ENCODE measurements at regions of chr2 and their contacts with region 1.

Region 1: DNA sequence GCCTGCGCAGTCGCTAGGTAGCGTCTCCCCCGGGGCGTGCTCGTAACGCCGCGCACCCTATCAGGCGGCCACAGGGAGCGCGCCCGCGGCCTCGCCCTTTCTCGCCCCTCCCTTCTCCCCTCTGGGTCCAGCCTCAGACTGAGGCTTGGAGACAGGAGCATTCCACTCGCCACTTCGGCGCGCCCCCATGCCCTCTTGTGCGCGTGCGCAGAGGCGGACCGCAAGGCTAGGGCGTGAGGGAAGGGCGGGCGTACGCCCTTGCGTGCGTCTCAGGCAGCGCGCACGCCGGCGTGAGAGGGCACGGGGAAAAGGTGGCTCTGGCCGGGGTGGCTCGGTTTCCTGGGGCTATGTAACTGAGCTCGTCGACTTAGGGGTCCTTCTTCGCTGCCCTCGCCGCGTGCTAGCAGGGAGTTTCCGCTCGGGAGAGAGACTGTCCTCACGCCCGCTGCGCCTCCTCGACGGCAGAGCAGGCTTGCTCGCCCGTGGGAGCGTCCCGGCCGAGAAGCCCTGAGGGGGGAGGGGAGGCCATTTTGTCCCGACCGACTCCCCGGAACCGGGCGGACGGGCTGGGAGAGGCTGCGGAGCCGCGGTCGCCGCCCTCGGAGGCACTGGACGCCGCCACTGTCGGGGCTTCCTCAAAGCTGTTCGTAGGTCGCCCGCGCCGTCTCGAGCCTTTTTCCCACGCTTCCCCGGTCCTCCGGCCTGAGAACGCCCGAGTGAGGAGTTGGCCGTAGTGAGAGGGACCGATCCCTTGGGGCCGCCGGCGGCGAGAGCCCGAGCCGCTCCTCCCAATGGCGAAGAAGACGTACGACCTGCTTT is at the start of gene RAB10:
- DNase-seq: peak; percentile 97 to 99
- H3K4me3 ChIP-seq: peak within 1 kb of the TSS; percentile 97 to 99 (median 99)
- H3K27ac ChIP-seq: peak within 1 kb of the TSS; percentile 90
- H3K4me1 ChIP-seq: peaks cover 0 to 4% (median 1%) of the 10 kb centered on the region in 4 experiments; a peak in 6 of 7 replicates
- H3K27me3 ChIP-seq: no peaks in the 10 kb centered on the region
- CTCF ChIP-seq: 0 out of 4 replicates have a peak, but pooled peaks of 1 of the 3 experiments have one; percentile 2
- EP300 ChIP-seq: no peak
- POLR2A ChIP-seq: peak; percentile 90 to 92
- RAD21 ChIP-seq: no peak
- total RNA-seq, gene RAB10: 127 and 136 TPM in 2 replicates

Region 2: GRCh38 chr2:26008822-26009566 is 25.0 kb before region 1 on chr2:
- CTCF ChIA-PET with region 1: interaction called, 3 read pairs
- POLR2A ChIA-PET with region 1: interaction called, 16 read pairs
- DNase-seq: no peak
- H3K4me3 ChIP-seq: no peak overlapping the region
- H3K27ac ChIP-seq: no peak overlapping the region
- H3K4me1 ChIP-seq: peaks cover 3 to 8% (median 4%) of the 10 kb centered on the region in 4 experiments; a peak in 4 of 7 replicates
- H3K27me3 ChIP-seq: no peaks in the 10 kb centered on the region
- CTCF ChIP-seq: no peak
- EP300 ChIP-seq: no peak
- POLR2A ChIP-seq: no peak
- RAD21 ChIP-seq: no peak

Region 3: GRCh38 chr2:26048791-26049190 is 14.8 kb after region 1 on chr2:
- CTCF ChIA-PET with region 1: interaction called, 3 read pairs
- POLR2A ChIA-PET with region 1: interaction called, 16 read pairs
- DNase-seq: no peak
- H3K4me3 ChIP-seq: no peak overlapping the region
- H3K27ac ChIP-seq: no peak overlapping the region
- H3K4me1 ChIP-seq: peaks cover 0 to 6% (median 2%) of the 10 kb centered on the region in 4 experiments; a peak in 2 of 7 replicates
- H3K27me3 ChIP-seq: no peaks in the 10 kb centered on the region
- CTCF ChIP-seq: no peak
- EP300 ChIP-seq: no peak
- POLR2A ChIP-seq: no peak
- RAD21 ChIP-seq: no peak

Region 4: GRCh38 chr2:26058390-26058789 is 24.4 kb after region 1 on chr2:
- CTCF ChIA-PET with region 1: interaction called, 7 read pairs
- POLR2A ChIA-PET with region 1: interaction called, 14 read pairs
- DNase-seq: no peak
- H3K4me3 ChIP-seq: no peak overlapping the region
- H3K27ac ChIP-seq: no peak overlapping the region
- H3K4me1 ChIP-seq: no peaks in the 10 kb centered on the region; a peak in 1 of 7 replicates
- H3K27me3 ChIP-seq: no peaks in the 10 kb centered on the region
- CTCF ChIP-seq: no peak
- EP300 ChIP-seq: no peak
- POLR2A ChIP-seq: no peak
- RAD21 ChIP-seq: no peak

Region 5: DNA sequence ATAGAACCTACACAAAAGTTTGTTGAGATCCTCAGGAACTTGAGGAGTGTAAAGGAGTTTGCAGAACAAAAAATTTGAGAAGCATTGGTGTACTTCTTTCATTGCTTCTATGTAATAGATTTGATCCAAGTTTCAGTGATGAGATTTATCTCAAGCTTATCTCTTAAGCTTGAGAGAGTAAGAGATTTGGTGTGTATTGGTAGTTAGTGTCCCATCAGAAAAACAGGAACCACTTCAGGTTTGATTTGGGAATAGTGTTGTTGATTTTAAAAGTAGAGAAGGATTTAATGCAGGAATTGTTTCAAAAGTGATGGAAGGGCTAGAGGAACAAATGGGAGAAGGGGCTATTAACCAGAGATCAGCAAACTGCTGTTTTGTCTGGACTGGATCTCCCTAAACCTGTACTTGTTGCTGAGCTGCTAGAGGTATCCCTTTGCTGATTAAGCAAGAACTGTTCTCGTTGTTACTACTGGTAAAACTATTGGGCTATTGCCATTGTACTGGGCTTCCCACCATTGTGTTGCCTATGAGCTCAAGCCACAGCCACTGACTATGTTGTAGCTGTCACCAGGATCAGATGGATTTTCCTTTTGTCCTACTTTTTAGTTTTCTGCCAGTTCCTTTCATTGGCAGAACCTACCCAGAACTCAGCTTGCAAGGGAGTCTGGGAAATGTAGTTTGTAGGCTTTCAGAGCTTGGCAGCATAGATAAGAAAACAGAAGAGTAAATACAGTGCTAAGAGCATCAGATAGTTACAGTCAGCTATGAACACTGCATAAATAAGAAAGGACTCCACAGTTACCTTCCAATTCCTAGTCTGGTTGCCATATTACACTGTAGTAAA is 39.1 kb after region 1 on chr2:
- CTCF ChIA-PET with region 1: interaction called, 5 read pairs
- POLR2A ChIA-PET with region 1: interaction called, 44 read pairs
- DNase-seq: no peak
- H3K4me3 ChIP-seq: no peak overlapping the region
- H3K27ac ChIP-seq: no peak overlapping the region
- H3K4me1 ChIP-seq: peaks cover 0 to 13% (median 2%) of the 10 kb centered on the region in 4 experiments; a peak in 5 of 7 replicates
- H3K27me3 ChIP-seq: no peaks in the 10 kb centered on the region
- CTCF ChIP-seq: no peak
- EP300 ChIP-seq: no peak
- POLR2A ChIP-seq: no peak
- RAD21 ChIP-seq: no peak